Activated CD4-positive, alpha-beta T cell treated with anti-CD3 and anti-CD28 coated beads, Interleukin-2, amount 10 ng/mL, durations not matched to agents 24 days and 14 days (primary cell): ENCODE measurements at regions of chr4 and their contacts with region 1.

Region 1: DNA sequence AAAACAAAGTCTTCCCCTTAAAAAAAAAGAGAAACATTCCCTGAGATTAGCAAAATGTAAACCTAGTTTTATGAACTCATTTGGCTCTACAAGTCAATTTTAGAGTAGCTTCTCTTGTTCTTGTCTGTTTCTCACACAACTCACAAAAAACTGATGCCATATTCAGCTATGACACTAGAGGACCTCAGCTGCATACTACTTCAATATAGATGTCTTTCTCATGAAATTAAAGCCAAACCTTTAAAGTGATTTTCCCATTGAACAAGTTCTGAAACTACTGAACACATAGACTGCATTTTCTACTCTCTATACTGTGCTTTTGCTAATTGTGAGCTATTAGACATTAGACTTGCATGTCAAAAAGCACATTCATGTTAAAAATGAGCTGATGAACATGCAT is 49.8 kb downstream of the TBCK start:
- DNase-seq: no peak
- H3K4me3 Mint-ChIP-seq: no peak overlapping the region
- H3K27ac Mint-ChIP-seq: no peak overlapping the region
- H3K4me1 Mint-ChIP-seq: no peaks in the 10 kb centered on the region
- H3K27me3 Mint-ChIP-seq: no peaks in the 10 kb centered on the region

Region 2: DNA sequence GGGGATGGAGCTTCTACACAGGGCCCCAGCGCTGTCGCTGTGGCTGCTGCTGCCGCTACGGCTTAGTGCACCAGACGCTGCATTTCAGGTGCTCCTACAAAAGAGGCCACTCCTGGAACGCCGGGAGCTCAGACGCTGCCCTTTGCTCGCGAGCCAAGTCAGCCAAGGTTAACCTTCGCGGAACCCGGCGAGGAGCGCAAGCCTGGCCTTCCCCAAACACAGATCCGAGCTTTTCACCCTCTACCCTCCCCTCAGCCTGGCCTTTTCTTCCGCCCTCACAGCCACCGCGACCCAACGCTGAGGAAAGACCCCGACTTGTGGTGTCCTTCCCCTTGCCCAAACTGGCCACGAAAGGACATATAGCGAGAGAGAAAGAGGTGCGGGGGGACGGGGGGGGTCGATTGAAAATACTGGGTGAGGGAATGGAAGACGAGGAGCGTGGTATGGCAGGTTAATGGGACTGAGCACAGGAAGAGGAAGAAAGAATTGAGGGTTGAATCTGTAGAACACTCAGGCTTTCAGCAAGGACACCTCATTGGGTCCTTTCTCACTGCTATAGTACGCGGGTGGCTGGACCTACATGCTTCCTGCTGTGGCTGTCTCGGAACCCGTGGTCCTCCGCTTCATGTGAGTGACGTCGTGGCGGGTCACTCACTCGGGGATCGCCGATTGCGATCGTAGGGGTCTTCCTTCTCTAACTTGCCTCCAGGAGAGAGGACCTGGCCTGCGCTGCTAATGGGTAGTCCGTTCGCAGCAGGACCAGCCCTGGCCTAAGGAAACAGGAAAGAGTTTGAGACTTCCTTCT is 50.0 kb after region 1 on chr4 and contains the starts of genes AIMP1 and TBCK:
- intact Hi-C with region 1: no loop called
- DNase-seq: peak; percentile 96
- H3K4me3 Mint-ChIP-seq: no peak within 1 kb of the TSS
- H3K27ac Mint-ChIP-seq: peak within 1 kb of the TSS; percentile 87
- H3K4me1 Mint-ChIP-seq: peaks cover 23% of the 10 kb centered on the region
- H3K27me3 Mint-ChIP-seq: no peaks in the 10 kb centered on the region
- total RNA-seq, gene AIMP1: 82.6 and 84.7 TPM in 2 replicates
- total RNA-seq, gene TBCK: 28.1 and 29.5 TPM in 2 replicates

Region 3: DNA sequence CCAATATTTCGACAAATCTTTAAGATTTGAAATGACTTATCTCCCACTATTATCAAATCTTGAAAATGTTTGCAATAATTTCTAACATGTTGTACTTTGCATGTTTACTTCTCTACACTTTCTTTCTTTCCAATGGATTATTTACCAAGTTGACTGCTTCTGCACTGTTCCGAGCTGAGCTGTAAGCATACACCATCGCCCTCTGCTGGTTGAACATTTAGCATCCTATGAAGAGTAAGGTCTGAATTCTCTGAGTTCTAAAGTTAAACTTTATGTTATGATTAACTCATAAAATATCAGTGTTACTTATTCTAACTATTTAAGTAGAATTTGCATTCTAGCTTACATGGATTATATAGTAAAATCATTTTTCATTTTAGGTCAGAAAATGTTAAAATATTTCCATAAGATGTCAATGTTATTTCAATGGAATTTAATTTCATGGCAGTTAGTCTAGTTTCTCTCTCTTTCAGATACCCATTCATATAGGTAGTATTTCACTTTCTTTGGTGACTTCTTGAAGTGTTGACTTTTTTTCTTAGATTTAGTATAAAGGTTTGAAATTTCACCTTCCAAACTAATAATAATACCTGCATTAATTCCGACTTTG is 632.5 kb after region 1 on chr4:
- intact Hi-C with region 1: loop called (anchors 2 kb)
- DNase-seq: peak; percentile 70
- H3K4me3 Mint-ChIP-seq: no peak overlapping the region
- H3K27ac Mint-ChIP-seq: no peak overlapping the region
- H3K4me1 Mint-ChIP-seq: no peaks in the 10 kb centered on the region
- H3K27me3 Mint-ChIP-seq: no peaks in the 10 kb centered on the region